Prostate gland (tissue), 2 donors: ENCODE measurements at regions of chr4 and their contacts with region 1.

Region 1: DNA sequence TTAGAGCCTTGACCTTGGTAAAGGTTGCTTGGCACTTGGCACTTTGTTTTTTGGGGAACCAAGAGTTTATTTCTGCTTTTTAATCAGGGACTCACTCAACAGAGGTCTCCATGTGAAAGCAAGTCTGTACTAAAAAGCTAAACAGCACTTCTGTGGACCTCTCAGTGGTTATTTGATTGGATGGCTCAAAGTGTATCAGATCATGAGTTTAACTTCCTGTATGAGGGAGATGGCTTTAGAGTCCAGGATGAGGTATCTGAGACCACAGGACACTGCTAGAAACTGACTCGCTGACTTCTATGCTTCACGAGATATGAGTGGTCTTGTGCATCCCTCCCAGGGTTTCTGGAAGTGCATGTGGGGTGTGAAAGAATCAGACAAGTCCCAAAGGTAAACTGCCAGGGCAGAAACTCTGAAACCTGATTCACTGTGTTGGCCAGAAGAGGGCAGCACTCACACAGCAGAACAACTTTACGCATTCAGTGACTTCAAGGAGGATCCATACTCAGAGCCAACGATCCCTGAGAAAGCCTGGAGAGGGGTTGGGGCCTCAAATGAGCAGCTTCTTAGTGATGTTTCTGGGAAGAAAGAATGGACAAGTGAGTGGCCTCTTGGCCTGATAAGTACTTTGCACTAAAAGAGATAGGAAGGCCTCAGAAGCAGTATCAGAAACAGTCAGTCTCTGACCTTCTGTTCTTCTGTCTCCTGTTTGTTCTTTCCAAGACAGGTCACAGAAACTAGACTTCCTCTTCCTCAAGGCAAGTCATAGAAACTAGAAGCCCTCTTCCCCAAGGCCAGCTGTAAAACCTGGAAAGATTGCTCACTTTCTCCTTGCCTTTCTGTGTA is 220.3 kb upstream of the CXCL13 start:
- DNase-seq: peak; percentile 71
- H3K4me3 ChIP-seq: no peak overlapping the region
- H3K27ac ChIP-seq: no peak overlapping the region
- H3K4me1 ChIP-seq: no peaks in the 10 kb centered on the region
- H3K27me3 ChIP-seq: no peaks in the 10 kb centered on the region
- CTCF ChIP-seq: peak; percentile 56 to 89 (median 84)
- POLR2A ChIP-seq: no peak

Region 2: DNA sequence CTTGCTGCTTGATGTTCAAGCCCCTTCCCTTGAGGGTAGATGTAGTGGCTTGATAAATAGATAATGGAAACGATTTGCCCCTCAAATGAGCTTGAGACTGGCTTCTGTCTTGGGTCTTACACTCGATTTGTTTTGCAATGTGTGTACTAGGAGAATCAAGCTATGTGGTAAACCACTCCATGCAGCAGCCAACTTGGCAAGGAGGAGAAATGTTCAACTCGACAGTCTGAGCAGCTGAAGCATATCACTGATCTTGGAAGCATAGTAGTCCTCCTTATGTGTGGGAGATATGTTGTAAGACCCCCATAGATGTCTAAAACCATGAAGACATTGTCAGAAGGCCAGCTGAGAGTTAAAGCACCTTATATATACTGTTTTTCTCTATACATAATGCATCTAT is 103.0 kb before region 1 on chr4:
- intact Hi-C with region 1: no loop called
- DNase-seq: no peak
- H3K4me3 ChIP-seq: no peak overlapping the region
- H3K27ac ChIP-seq: no peak overlapping the region
- H3K4me1 ChIP-seq: no peaks in the 10 kb centered on the region
- H3K27me3 ChIP-seq: no peaks in the 10 kb centered on the region
- CTCF ChIP-seq: no peak
- POLR2A ChIP-seq: no peak

Region 3: GRCh38 chr4:77332696-77333270 is 52.6 kb before region 1 on chr4:
- intact Hi-C with region 1: no loop called
- DNase-seq: no peak
- H3K4me3 ChIP-seq: no peak overlapping the region
- H3K27ac ChIP-seq: no peak overlapping the region
- H3K4me1 ChIP-seq: no peaks in the 10 kb centered on the region
- H3K27me3 ChIP-seq: no peaks in the 10 kb centered on the region
- CTCF ChIP-seq: no peak
- POLR2A ChIP-seq: no peak

Region 4: DNA sequence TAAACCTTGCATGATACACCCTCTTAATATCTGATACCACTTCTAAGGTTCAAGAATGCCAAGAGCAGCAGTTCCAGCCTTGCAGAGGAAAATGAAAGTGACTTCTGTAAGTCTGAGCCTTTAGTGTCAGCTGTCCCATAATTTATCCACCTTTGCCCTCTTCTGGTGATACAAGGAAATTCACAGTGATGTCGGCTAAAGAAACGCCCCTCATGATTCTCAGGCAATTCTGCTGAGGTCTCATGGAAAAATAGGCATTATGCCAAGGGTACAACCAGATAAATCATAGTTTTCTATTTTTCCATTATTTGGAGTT is 48.0 kb after region 1 on chr4:
- intact Hi-C with region 1: loop called (anchors 5 kb)
- DNase-seq: peak; percentile 28
- H3K4me3 ChIP-seq: no peak overlapping the region
- H3K27ac ChIP-seq: no peak overlapping the region
- H3K4me1 ChIP-seq: no peaks in the 10 kb centered on the region
- H3K27me3 ChIP-seq: no peaks in the 10 kb centered on the region
- CTCF ChIP-seq: peak in 3 of 4 experiments; percentile 47 to 70 (median 68)
- POLR2A ChIP-seq: no peak

Region 5: GRCh38 chr4:77481856-77482255 is 96.5 kb after region 1 on chr4:
- intact Hi-C with region 1: no loop called
- DNase-seq: no peak
- H3K4me3 ChIP-seq: no peak overlapping the region
- H3K27ac ChIP-seq: no peak overlapping the region
- H3K4me1 ChIP-seq: no peaks in the 10 kb centered on the region
- H3K27me3 ChIP-seq: no peaks in the 10 kb centered on the region
- CTCF ChIP-seq: no peak
- POLR2A ChIP-seq: no peak

Region 6: GRCh38 chr4:77600521-77601451 is 215.4 kb after region 1 on chr4:
- intact Hi-C with region 1: loop called (anchors 5 kb)
- DNase-seq: peak; percentile 52
- H3K4me3 ChIP-seq: no peak overlapping the region
- H3K27ac ChIP-seq: peak overlapping the region; percentile 20 to 59
- H3K4me1 ChIP-seq: no peaks in the 10 kb centered on the region
- H3K27me3 ChIP-seq: no peaks in the 10 kb centered on the region
- CTCF ChIP-seq: peak; percentile 65 to 77 (median 72)
- POLR2A ChIP-seq: no peak

Region 7: GRCh38 chr4:77618383-77619122 is 233.2 kb after region 1 on chr4:
- intact Hi-C with region 1: loop called (anchors 2 kb)
- DNase-seq: peak; percentile 87
- H3K4me3 ChIP-seq: no peak overlapping the region
- H3K27ac ChIP-seq: peak overlapping the region; percentile 1 to 80
- H3K4me1 ChIP-seq: peaks cover 6% of the 10 kb centered on the region
- H3K27me3 ChIP-seq: no peaks in the 10 kb centered on the region
- CTCF ChIP-seq: peak; percentile 51 to 86 (median 85)
- POLR2A ChIP-seq: no peak

Region 8: DNA sequence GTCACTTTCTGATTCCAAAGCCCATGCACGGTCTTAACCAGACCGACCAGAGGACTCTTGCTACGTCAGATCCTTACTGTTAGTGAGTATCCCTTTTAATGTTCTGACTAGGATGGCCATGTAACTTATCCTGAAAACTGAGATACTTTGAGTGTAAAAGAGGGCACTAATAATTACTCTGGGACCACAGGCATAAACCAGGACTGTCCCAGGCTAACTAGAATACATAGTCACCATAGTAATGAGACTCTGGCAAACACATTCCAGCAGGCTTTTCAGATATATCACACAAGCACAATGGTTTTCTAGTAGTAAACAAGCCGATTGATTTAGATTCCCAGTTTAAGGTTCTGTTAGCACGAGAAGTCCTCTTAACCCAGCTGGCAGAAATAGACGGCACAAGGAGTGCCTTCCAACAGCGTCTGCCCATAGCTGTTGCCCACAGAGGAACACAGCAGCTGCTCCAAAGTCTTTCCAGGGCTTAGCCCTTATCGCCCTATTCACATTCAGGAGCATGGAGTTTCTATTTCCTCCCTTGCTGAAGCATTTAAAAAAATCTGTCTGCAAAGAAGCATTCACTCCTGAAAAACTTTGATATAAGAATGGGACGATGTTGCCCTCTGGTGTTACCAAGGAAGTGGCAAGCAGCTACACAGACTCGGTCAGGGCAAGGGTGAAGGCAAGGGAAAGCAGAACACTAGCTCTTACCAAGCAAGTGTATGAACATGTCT is 312.7 kb after region 1 on chr4:
- intact Hi-C with region 1: loop called (anchors 5 kb)
- DNase-seq: peak; percentile 39
- H3K4me3 ChIP-seq: no peak overlapping the region
- H3K27ac ChIP-seq: peak overlapping the region in 1 of 2 donors; percentile 50
- H3K4me1 ChIP-seq: no peaks in the 10 kb centered on the region
- H3K27me3 ChIP-seq: no peaks in the 10 kb centered on the region
- CTCF ChIP-seq: peak in 3 of 4 experiments; percentile 51 to 61 (median 53)
- POLR2A ChIP-seq: no peak